Vagina (tissue), 2 donors: ENCODE measurements at regions of chr1 and their contacts with region 1.

Region 1: GRCh38 chr1:9018333-9018732 is 7.9 kb downstream of the SLC2A7 start:
- DNase-seq: no peak
- H3K4me3 ChIP-seq: no peak overlapping the region
- H3K27ac ChIP-seq: no peak overlapping the region
- H3K4me1 ChIP-seq: no peaks in the 10 kb centered on the region
- H3K27me3 ChIP-seq: no peaks in the 10 kb centered on the region
- CTCF ChIP-seq: no peak
- POLR2A ChIP-seq: no peak

Region 2: DNA sequence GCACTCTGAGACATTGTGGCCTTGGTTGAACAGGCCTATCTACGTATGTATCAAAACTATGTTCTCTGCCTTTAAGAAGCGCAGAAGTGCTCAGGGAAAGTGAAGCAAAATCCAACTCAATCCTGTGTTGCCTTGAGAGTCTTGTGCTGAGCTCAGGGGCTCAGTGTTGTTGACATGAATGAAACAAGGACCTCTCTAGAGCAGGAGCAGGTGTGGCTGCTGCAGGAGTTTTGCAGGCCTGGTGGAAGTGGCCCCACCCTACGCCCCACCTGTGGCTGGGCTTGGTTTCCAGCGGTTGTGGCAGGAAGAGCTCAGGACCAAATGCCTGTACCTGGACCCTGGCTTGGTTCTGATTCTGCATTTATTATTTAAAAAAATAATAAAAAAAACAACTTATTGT is 51.7 kb before region 1 on chr1:
- intact Hi-C with region 1: loop called (anchors 2 kb)
- DNase-seq: no peak
- H3K4me3 ChIP-seq: no peak overlapping the region
- H3K27ac ChIP-seq: no peak overlapping the region
- H3K4me1 ChIP-seq: no peaks in the 10 kb centered on the region
- H3K27me3 ChIP-seq: no peaks in the 10 kb centered on the region
- CTCF ChIP-seq: no peak
- POLR2A ChIP-seq: no peak

Region 3: DNA sequence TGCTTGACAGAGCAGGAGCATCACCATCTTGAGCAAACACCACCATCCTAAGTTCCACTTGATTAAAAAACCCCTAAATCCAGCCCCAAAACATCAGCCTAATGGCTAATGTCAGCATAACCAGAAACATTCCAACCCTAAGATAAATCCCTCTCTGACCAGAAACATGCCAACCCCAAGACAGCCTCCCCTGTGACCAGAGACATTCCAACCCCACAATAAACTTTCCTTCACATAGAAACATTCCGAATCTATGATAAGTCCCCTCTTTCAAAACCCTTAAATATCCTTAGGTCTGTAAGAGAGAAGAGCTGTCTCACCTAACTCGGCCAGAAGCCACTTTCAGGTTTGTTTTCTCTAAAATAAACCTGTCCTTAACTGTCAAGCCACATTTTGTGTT is 68.5 kb after region 1 on chr1:
- intact Hi-C with region 1: no loop called
- DNase-seq: no peak
- H3K4me3 ChIP-seq: no peak overlapping the region
- H3K27ac ChIP-seq: no peak overlapping the region
- H3K4me1 ChIP-seq: peaks cover 38% of the 10 kb centered on the region
- H3K27me3 ChIP-seq: no peaks in the 10 kb centered on the region
- CTCF ChIP-seq: no peak
- POLR2A ChIP-seq: no peak

Region 4: DNA sequence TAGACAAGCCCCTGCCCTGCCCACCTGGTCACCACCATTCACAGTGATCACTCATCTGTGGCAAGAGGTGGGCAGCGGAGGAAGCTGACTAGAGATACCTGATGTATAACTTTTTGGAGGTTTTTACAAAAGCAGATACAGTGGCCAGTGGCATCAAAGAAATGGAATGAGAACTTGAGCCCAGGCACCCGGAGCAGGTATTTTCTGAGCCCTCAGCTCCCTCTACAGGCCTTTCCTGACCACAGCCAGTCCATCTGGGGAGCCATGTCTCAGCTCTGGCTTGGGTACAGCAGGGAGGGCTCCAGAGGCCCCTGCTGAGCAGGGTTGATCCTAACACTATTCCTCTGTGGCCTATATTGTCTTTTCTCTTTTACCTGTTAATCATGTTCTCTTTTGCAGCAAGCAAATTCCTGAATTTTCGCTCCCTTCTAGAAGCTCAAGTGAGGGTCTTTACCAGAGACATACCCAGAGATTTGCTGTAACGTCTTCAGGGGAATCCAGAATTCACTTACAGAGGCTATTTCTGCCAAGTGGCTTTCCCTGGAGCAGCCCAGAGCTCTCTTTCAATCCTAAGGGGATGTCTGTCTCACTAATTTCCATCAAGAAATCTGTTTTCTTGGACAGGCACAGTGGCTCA is 83.3 kb after region 1 on chr1:
- intact Hi-C with region 1: no loop called
- DNase-seq: no peak
- H3K4me3 ChIP-seq: no peak overlapping the region
- H3K27ac ChIP-seq: peak overlapping the region; percentile 53
- H3K4me1 ChIP-seq: no peaks in the 10 kb centered on the region
- H3K27me3 ChIP-seq: no peaks in the 10 kb centered on the region
- CTCF ChIP-seq: peak in 2 of 3 experiments; percentile 50 to 56
- POLR2A ChIP-seq: no peak